ENCODE measurements at regions of chr16 and their contacts with region 1.

Region 1: DNA sequence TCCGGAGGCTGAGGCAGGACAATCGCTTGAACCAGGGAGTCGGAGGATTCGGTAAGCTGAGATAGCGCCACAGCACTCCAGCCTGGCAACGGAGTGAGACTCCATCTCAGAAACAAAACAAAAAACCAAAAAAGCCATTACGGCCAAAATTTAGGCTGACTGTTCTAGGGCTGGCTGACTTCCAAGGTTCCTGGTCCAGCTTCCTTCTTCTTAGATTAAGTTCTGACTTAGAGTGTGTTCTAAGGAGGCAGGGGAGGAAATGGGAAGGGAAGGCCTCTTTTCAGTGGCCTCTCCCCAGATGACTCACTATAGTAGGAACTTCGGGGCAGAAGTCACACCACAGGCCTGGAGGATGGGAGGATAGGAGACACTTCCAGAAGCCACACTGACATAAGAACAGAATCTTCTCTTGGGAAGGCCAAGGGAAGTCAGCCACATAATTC is 27.7 kb upstream of the CLEC18B start:
- DNase-seq: peak; percentile 81
- H3K4me3 ChIP-seq: no peak overlapping the region
- H3K27ac ChIP-seq: peak overlapping the region; percentile 82
- H3K4me1 ChIP-seq: peaks cover 36% of the 10 kb centered on the region
- H3K27me3 ChIP-seq: no peaks in the 10 kb centered on the region
- CTCF ChIP-seq: no peak

Region 2: DNA sequence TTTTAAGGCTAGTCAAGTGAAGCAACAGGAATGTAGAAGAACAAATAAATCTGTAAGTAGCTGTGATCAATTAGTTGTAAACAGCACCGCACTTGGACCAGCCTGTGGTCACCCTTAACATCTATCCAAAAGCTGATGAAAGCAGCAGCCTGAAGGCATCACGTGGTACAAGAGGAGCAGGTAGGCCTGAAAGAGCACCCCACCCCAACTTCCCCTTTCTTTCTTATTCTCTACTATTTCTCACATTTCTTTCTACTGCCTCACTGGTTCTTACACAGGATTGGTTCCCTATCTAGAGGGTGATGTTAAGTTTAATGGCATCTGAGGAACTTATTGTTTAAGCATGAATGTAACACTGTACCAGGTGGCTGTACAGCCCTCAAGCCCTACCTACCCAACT is 14.9 kb after region 1 on chr16:
- CTCF ChIA-PET with region 1: no interaction called
- dilution Hi-C with region 1: no loop called
- in situ Hi-C with region 1: no loop called
- intact Hi-C with region 1: loop called (anchors 1 kb)
- DNase-seq: no peak
- H3K4me3 ChIP-seq: no peak overlapping the region
- H3K27ac ChIP-seq: no peak overlapping the region
- H3K4me1 ChIP-seq: peaks cover 22% of the 10 kb centered on the region
- H3K27me3 ChIP-seq: no peaks in the 10 kb centered on the region
- CTCF ChIP-seq: no peak

Measured in mammary epithelial cell (primary cell).